ENCODE measurements at regions of chrX and their contacts with region 1.

Region 1: GRCh38 chrX:1491851-1492349 is 39.2 kb upstream of the ASMTL start:
- DNase-seq: peak; percentile 61
- ATAC-seq: peak; percentile 66
- H3K4me3 Mint-ChIP-seq: peak overlapping the region; percentile 88
- H3K27ac Mint-ChIP-seq: peak overlapping the region; percentile 88
- H3K4me1 Mint-ChIP-seq: peaks cover 69% of the 10 kb centered on the region
- H3K27me3 Mint-ChIP-seq: no peaks in the 10 kb centered on the region
- CTCF ChIP-seq: no peak

Region 2: GRCh38 chrX:1481636-1482529 is 10.0 kb before region 1 on chrX:
- CTCF ChIA-PET with region 1: no interaction called
- POLR2A ChIA-PET with region 1: no interaction called
- intact Hi-C with region 1: loop called (anchors 1 kb)
- DNase-seq: peak; percentile 63
- ATAC-seq: peak; percentile 53
- H3K4me3 Mint-ChIP-seq: peak overlapping the region; percentile 81
- H3K27ac Mint-ChIP-seq: peak overlapping the region; percentile 97
- H3K4me1 Mint-ChIP-seq: peaks cover 90% of the 10 kb centered on the region
- H3K27me3 Mint-ChIP-seq: no peaks in the 10 kb centered on the region
- CTCF ChIP-seq: no peak

Region 3: GRCh38 chrX:1521459-1521956 is 29.6 kb after region 1 on chrX:
- CTCF ChIA-PET with region 1: no interaction called
- POLR2A ChIA-PET with region 1: no interaction called
- intact Hi-C with region 1: loop called (anchors 1 kb)
- DNase-seq: peak; percentile 66
- ATAC-seq: peak; percentile 85
- H3K4me3 Mint-ChIP-seq: peak overlapping the region; percentile 83
- H3K27ac Mint-ChIP-seq: peak overlapping the region; percentile 97
- H3K4me1 Mint-ChIP-seq: peaks cover 64% of the 10 kb centered on the region
- H3K27me3 Mint-ChIP-seq: no peaks in the 10 kb centered on the region
- CTCF ChIP-seq: no peak

Measured in activated B cell treated with CpG ODN at 0.5 μM for 24 hours (primary cell).